ENCODE measurements at regions of chr12 and their contacts with region 1.

Region 1: GRCh38 chr12:45794422-45794821 is 64.9 kb downstream of the ARID2 start:
- DNase-seq: no peak
- ATAC-seq: no peak
- H3K4me3 ChIP-seq: no peak overlapping the region
- H3K4me3 Mint-ChIP-seq: no peak overlapping the region
- H3K27ac ChIP-seq: no peak overlapping the region
- H3K27ac Mint-ChIP-seq: no peak overlapping the region
- H3K4me1 ChIP-seq: no peaks in the 10 kb centered on the region
- H3K4me1 Mint-ChIP-seq: peaks cover 19 to 32% (median 30%) of the 10 kb centered on the region in 3 donors
- H3K27me3 ChIP-seq: no peaks in the 10 kb centered on the region
- H3K27me3 Mint-ChIP-seq: no peaks in the 10 kb centered on the region

Region 2: DNA sequence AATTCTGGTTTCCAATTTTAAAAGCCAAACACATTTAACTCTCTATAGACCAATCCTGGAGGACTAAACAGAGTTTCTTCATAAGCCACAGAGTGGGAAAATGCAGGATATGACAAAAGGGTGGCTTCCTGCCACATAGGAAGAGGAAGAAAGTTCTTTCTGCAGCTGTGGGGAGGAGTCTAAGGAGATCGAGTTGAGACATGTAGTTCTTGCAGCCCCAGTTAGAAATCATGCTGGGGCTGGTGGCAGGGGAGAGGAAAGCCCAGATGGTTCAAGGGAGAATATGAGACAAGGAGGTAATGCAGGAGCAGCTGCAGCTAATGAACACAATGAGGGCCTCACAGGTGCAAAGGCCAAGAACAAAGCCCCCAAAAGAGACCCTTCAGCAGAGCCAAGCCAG is 149.9 kb before region 1 on chr12:
- CTCF ChIA-PET with region 1: no interaction called
- POLR2A ChIA-PET with region 1: interaction called in 1 of 2 experiments, 10 read pairs
- DNase-seq: peak in 2 of 35 experiments; percentile 3 to 4
- ATAC-seq: peak in 1 of 4 experiments; percentile 31
- H3K4me3 ChIP-seq: no peak overlapping the region
- H3K4me3 Mint-ChIP-seq: peak overlapping the region in 1 of 3 donors; percentile 66
- H3K27ac ChIP-seq: no peak overlapping the region
- H3K27ac Mint-ChIP-seq: peak overlapping the region; percentile 7 to 44
- H3K4me1 ChIP-seq: peaks cover 4% of the 10 kb centered on the region in 2 experiments
- H3K4me1 Mint-ChIP-seq: peaks cover 9 to 12% (median 12%) of the 10 kb centered on the region in 3 donors
- H3K27me3 ChIP-seq: peaks cover 0 to 4% of the 10 kb centered on the region in 2 experiments
- H3K27me3 Mint-ChIP-seq: peaks cover 0 to 1% of the 10 kb centered on the region in 2 donors

Measured in T-cell (primary cell).